Natural killer cell (primary cell): ENCODE measurements at regions of chr2 and their contacts with region 1.

Region 1: GRCh38 chr2:221517696-221518151 is 54.4 kb downstream of the EPHA4 start:
- DNase-seq: peak; percentile 74 to 90
- ATAC-seq: peak; percentile 71 to 87 (median 77)
- H3K4me3 ChIP-seq: peak overlapping the region; percentile 32
- H3K4me3 Mint-ChIP-seq: no peak overlapping the region
- H3K27ac ChIP-seq: peak overlapping the region; percentile 99
- H3K27ac Mint-ChIP-seq: no peak overlapping the region
- H3K4me1 ChIP-seq: peaks cover 44% of the 10 kb centered on the region
- H3K4me1 Mint-ChIP-seq: peaks cover 0 to 5% of the 10 kb centered on the region in 2 donors
- H3K27me3 ChIP-seq: no peaks in the 10 kb centered on the region
- H3K27me3 Mint-ChIP-seq: no peaks in the 10 kb centered on the region
- CTCF ChIP-seq: no peak

Region 2: DNA sequence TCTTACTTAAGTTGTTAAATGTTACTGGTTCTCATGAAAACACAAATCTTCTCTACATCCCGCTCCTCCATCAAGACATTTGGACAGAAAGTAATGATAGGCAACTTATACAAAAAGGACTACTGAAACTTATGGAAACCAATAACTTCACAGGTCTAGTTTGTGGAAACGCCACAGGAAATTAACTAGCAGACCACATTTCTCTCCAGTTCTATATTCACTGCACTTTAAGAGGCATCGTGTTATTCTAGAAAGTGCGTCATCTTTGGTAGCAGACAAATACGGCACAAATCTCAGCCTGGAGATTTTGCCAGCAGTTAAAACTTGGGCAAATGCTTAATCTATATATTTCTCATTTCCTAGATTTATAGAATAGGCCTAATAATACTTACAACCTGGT is 110.0 kb before region 1 on chr2:
- intact Hi-C with region 1: loop called (anchors 2 kb)
- DNase-seq: no peak
- ATAC-seq: peak; percentile 54 to 95 (median 85)
- H3K4me3 ChIP-seq: no peak overlapping the region
- H3K4me3 Mint-ChIP-seq: peak overlapping the region; percentile 75
- H3K27ac ChIP-seq: no peak overlapping the region
- H3K27ac Mint-ChIP-seq: peak overlapping the region; percentile 42 to 77
- H3K4me1 ChIP-seq: peaks cover 17% of the 10 kb centered on the region
- H3K4me1 Mint-ChIP-seq: peaks cover 35 to 41% of the 10 kb centered on the region in 2 donors
- H3K27me3 ChIP-seq: no peaks in the 10 kb centered on the region
- H3K27me3 Mint-ChIP-seq: peaks cover 7 to 30% of the 10 kb centered on the region in 2 donors
- CTCF ChIP-seq: no peak

Region 3: GRCh38 chr2:221465776-221466175 is 51.9 kb before region 1 on chr2:
- intact Hi-C with region 1: loop called (anchors 1 kb)
- DNase-seq: peak; percentile 16 to 32
- ATAC-seq: peak; percentile 67 to 74 (median 73)
- H3K4me3 ChIP-seq: no peak overlapping the region
- H3K4me3 Mint-ChIP-seq: peak overlapping the region; percentile 68
- H3K27ac ChIP-seq: peak overlapping the region; percentile 39
- H3K27ac Mint-ChIP-seq: peak overlapping the region; percentile 71 to 78
- H3K4me1 ChIP-seq: peaks cover 28% of the 10 kb centered on the region
- H3K4me1 Mint-ChIP-seq: peaks cover 62 to 73% of the 10 kb centered on the region in 2 donors
- H3K27me3 ChIP-seq: no peaks in the 10 kb centered on the region
- H3K27me3 Mint-ChIP-seq: no peaks in the 10 kb centered on the region
- CTCF ChIP-seq: no peak

Region 4: GRCh38 chr2:221529943-221530652 is 12.4 kb after region 1 on chr2:
- intact Hi-C with region 1: loop called (anchors 1 kb)
- DNase-seq: peak in 1 of 2 donors; percentile 54
- ATAC-seq: peak; percentile 63 to 76 (median 67)
- H3K4me3 ChIP-seq: no peak overlapping the region
- H3K4me3 Mint-ChIP-seq: peak overlapping the region; percentile 90
- H3K27ac ChIP-seq: peak overlapping the region; percentile 81
- H3K27ac Mint-ChIP-seq: peak overlapping the region; percentile 87 to 92
- H3K4me1 ChIP-seq: peaks cover 34% of the 10 kb centered on the region
- H3K4me1 Mint-ChIP-seq: peaks cover 43 to 49% of the 10 kb centered on the region in 2 donors
- H3K27me3 ChIP-seq: no peaks in the 10 kb centered on the region
- H3K27me3 Mint-ChIP-seq: no peaks in the 10 kb centered on the region
- CTCF ChIP-seq: no peak

Region 5: GRCh38 chr2:221731443-221732145 is 213.9 kb after region 1 on chr2:
- intact Hi-C with region 1: no loop called
- DNase-seq: no peak
- ATAC-seq: no peak
- H3K4me3 ChIP-seq: no peak overlapping the region
- H3K4me3 Mint-ChIP-seq: no peak overlapping the region
- H3K27ac ChIP-seq: no peak overlapping the region
- H3K27ac Mint-ChIP-seq: no peak overlapping the region
- H3K4me1 ChIP-seq: no peaks in the 10 kb centered on the region
- H3K4me1 Mint-ChIP-seq: no peaks in the 10 kb centered on the region
- H3K27me3 ChIP-seq: no peaks in the 10 kb centered on the region
- H3K27me3 Mint-ChIP-seq: no peaks in the 10 kb centered on the region
- CTCF ChIP-seq: no peak